T-cell (primary cell): ENCODE measurements at regions of chr17 and their contacts with region 1.

Region 1: GRCh38 chr17:5557990-5558389 is 26.3 kb downstream of the NLRP1 start:
- DNase-seq: no peak
- ATAC-seq: no peak
- H3K4me3 ChIP-seq: no peak overlapping the region
- H3K4me3 Mint-ChIP-seq: no peak overlapping the region
- H3K27ac ChIP-seq: no peak overlapping the region
- H3K27ac Mint-ChIP-seq: no peak overlapping the region
- H3K4me1 ChIP-seq: peaks cover 0 to 13% of the 10 kb centered on the region in 2 experiments
- H3K4me1 Mint-ChIP-seq: peaks cover 14 to 39% (median 30%) of the 10 kb centered on the region in 3 donors
- H3K27me3 ChIP-seq: no peaks in the 10 kb centered on the region
- H3K27me3 Mint-ChIP-seq: no peaks in the 10 kb centered on the region

Region 2: DNA sequence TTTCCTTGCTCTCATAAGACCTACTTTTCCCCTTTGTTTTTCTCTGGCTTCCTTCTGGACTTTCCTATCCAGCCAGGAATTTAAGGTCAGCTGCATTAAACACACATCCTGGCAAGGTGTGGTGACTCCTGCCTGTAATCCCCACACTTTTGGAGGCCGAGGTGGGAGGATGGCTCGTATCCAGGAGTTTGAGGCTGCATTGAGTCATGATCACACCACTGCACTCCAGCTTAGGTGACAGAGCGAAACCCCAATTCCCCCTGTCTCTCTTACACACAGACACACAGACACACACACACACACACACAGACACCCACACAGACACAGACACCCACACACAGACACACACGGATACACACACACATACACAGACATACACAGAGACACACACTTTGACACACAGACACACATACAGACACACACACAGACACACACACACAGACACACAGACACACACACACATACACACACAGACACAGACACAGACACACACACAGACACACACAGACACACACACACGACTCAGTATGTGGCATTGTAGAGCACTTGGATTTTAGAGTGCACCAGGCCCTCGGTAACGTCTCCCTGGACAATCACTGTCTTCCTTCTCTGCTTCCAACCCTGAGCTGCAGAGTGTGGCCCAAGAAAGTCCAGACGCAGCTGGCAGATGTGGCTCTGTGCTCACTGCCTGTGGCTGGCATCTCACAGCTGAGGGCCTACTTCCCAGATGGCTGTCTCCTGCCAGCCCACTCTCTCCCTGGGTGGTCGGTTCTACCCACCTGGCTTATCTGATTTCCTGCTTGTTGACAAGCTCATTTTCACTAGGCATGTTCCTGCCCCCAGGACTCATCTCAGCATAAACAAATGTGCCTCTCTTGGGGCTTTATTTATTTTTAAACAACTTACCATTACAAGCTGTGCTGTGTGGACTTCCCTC is 12.7 kb before region 1 on chr17:
- CTCF ChIA-PET with region 1: no interaction called
- POLR2A ChIA-PET with region 1: no interaction called
- DNase-seq: peak in 1 of 35 experiments; percentile 10
- ATAC-seq: peak in 1 of 4 experiments; percentile 12
- H3K4me3 ChIP-seq: no peak overlapping the region
- H3K4me3 Mint-ChIP-seq: no peak overlapping the region
- H3K27ac ChIP-seq: no peak overlapping the region
- H3K27ac Mint-ChIP-seq: peak overlapping the region; percentile 2 to 48
- H3K4me1 ChIP-seq: no peaks in the 10 kb centered on the region
- H3K4me1 Mint-ChIP-seq: peaks cover 2 to 24% (median 8%) of the 10 kb centered on the region in 3 donors
- H3K27me3 ChIP-seq: no peaks in the 10 kb centered on the region
- H3K27me3 Mint-ChIP-seq: no peaks in the 10 kb centered on the region

Region 3: GRCh38 chr17:6427279-6427781 is 869.3 kb after region 1 on chr17:
- CTCF ChIA-PET with region 1: no interaction called
- POLR2A ChIA-PET with region 1: interaction called in 1 of 2 experiments, 10 read pairs
- DNase-seq: peak in 24 of 35 experiments; percentile 7 to 63 (median 24)
- ATAC-seq: peak; percentile 50 to 93 (median 71)
- H3K4me3 ChIP-seq: no peak overlapping the region
- H3K4me3 Mint-ChIP-seq: peak overlapping the region in 2 of 3 donors; percentile 21 to 58
- H3K27ac ChIP-seq: no peak overlapping the region
- H3K27ac Mint-ChIP-seq: peak overlapping the region; percentile 66 to 71
- H3K4me1 ChIP-seq: peaks cover 7 to 25% of the 10 kb centered on the region in 2 experiments
- H3K4me1 Mint-ChIP-seq: peaks cover 16 to 18% (median 17%) of the 10 kb centered on the region in 3 donors
- H3K27me3 ChIP-seq: peaks cover 2 to 30% of the 10 kb centered on the region in 2 experiments
- H3K27me3 Mint-ChIP-seq: peaks cover 0 to 4% of the 10 kb centered on the region in 2 donors